Mammary epithelial cell (primary cell): ENCODE measurements at regions of chr16 and their contacts with region 1.

Region 1: GRCh38 chr16:27058299-27058698 is 8.4 kb upstream of the C16orf82 start:
- DNase-seq: no peak
- H3K4me3 ChIP-seq: no peak overlapping the region
- H3K27ac ChIP-seq: no peak overlapping the region
- H3K4me1 ChIP-seq: no peaks in the 10 kb centered on the region
- H3K27me3 ChIP-seq: no peaks in the 10 kb centered on the region
- CTCF ChIP-seq: no peak

Region 2: DNA sequence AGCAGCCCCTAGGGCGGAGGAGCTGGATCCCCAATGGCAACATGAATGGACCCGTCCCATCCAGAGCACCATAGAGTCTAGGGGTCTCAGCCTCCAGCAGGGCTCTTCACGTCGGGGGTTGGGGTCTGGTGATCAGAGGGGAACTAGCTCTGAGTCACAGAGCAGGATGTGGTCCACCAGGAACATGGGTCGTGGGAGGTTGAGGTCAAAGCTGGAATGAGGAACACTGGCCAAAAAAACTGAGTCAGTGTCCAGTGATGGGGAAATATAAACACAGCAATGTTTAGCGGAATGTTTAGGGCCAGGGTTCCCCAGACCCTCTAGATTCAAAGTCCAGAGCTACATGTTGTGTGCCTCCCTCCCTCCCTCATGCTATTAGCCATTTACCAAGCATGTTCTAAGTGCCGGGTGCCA is 70.7 kb before region 1 on chr16:
- CTCF ChIA-PET with region 1: no interaction called
- dilution Hi-C with region 1: loop called (anchors 5 kb)
- in situ Hi-C with region 1: no loop called
- intact Hi-C with region 1: no loop called
- DNase-seq: no peak
- H3K4me3 ChIP-seq: no peak overlapping the region
- H3K27ac ChIP-seq: no peak overlapping the region
- H3K4me1 ChIP-seq: no peaks in the 10 kb centered on the region
- H3K27me3 ChIP-seq: no peaks in the 10 kb centered on the region
- CTCF ChIP-seq: no peak

Region 3: GRCh38 chr16:27107185-27107592 is 48.9 kb after region 1 on chr16:
- CTCF ChIA-PET with region 1: no interaction called
- dilution Hi-C with region 1: no loop called
- in situ Hi-C with region 1: no loop called
- intact Hi-C with region 1: no loop called
- DNase-seq: no peak
- H3K4me3 ChIP-seq: no peak overlapping the region
- H3K27ac ChIP-seq: no peak overlapping the region
- H3K4me1 ChIP-seq: no peaks in the 10 kb centered on the region
- H3K27me3 ChIP-seq: no peaks in the 10 kb centered on the region
- CTCF ChIP-seq: no peak

Region 4: DNA sequence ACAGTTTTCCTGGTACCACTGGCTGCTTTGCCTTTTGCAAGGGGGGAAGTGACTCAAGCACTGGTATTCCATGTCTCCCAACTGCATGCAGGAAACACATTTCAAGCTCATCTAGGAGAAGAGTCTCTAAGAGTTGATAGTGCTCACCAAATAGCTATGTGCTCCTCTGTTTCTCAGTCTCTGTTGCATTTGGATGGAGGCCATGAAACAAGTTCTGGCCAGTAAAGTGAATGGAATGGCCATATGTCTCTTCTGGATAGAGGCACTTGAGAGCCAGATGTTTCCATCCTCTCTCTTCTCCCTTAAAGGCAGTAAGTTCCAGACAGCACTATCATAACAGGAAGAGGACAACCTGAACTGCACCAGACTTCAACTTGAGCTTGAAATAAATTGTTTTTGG is 69.0 kb after region 1 on chr16:
- CTCF ChIA-PET with region 1: no interaction called
- dilution Hi-C with region 1: loop called (anchors 5 kb)
- in situ Hi-C with region 1: no loop called
- intact Hi-C with region 1: no loop called
- DNase-seq: peak; percentile 30
- H3K4me3 ChIP-seq: no peak overlapping the region
- H3K27ac ChIP-seq: no peak overlapping the region
- H3K4me1 ChIP-seq: no peaks in the 10 kb centered on the region
- H3K27me3 ChIP-seq: no peaks in the 10 kb centered on the region
- CTCF ChIP-seq: no peak